Vagina (tissue), 2 donors: ENCODE measurements at regions of chr3 and their contacts with region 1.

Region 1: GRCh38 chr3:150408221-150409102 is at the start of gene TSC22D2:
- DNase-seq: peak in 1 of 2 donors; percentile 93
- H3K4me3 ChIP-seq: peak within 1 kb of the TSS; percentile 74 to 84
- H3K27ac ChIP-seq: peak within 1 kb of the TSS; percentile 99
- H3K4me1 ChIP-seq: peaks cover 30% of the 10 kb centered on the region
- H3K27me3 ChIP-seq: no peaks in the 10 kb centered on the region
- CTCF ChIP-seq: peak in 1 of 3 experiments; percentile 19
- POLR2A ChIP-seq: peak; percentile 82 to 98
- total RNA-seq, gene TSC22D2: 35.6 TPM

Region 2: GRCh38 chr3:149969940-149970715 is 438.3 kb before region 1 on chr3:
- intact Hi-C with region 1: loop called (anchors 10 kb)
- DNase-seq: peak in 1 of 2 donors; percentile 91
- H3K4me3 ChIP-seq: peak overlapping the region; percentile 91 to 95
- H3K27ac ChIP-seq: peak overlapping the region; percentile 94
- H3K4me1 ChIP-seq: peaks cover 22% of the 10 kb centered on the region
- H3K27me3 ChIP-seq: no peaks in the 10 kb centered on the region
- CTCF ChIP-seq: no peak
- POLR2A ChIP-seq: no peak

Region 3: GRCh38 chr3:150253622-150254021 is 154.8 kb before region 1 on chr3:
- intact Hi-C with region 1: loop called (anchors 5 kb)
- DNase-seq: no peak
- H3K4me3 ChIP-seq: no peak overlapping the region
- H3K27ac ChIP-seq: no peak overlapping the region
- H3K4me1 ChIP-seq: peaks cover 30% of the 10 kb centered on the region
- H3K27me3 ChIP-seq: no peaks in the 10 kb centered on the region
- CTCF ChIP-seq: no peak
- POLR2A ChIP-seq: no peak

Region 4: DNA sequence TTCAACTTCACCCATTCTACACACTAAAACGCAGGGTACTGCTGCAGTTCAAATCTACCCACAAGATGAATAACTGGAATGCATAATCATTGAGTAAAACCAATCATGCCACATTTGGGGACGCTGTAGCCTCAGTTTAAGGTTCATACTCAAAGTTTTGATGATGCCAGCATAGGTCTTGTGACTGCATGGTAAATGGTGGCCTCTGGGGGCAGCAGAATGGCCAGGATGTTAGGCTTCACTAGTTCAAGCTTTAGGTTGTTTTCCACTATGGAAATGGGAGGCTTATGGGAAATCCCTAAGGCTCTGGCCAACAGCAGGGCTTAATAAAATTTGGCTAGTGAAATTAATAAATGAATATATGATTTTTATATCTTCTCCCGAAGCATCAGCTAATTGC is 104.7 kb before region 1 on chr3:
- intact Hi-C with region 1: no loop called
- DNase-seq: no peak
- H3K4me3 ChIP-seq: no peak overlapping the region
- H3K27ac ChIP-seq: no peak overlapping the region
- H3K4me1 ChIP-seq: no peaks in the 10 kb centered on the region
- H3K27me3 ChIP-seq: no peaks in the 10 kb centered on the region
- CTCF ChIP-seq: no peak
- POLR2A ChIP-seq: no peak

Region 5: DNA sequence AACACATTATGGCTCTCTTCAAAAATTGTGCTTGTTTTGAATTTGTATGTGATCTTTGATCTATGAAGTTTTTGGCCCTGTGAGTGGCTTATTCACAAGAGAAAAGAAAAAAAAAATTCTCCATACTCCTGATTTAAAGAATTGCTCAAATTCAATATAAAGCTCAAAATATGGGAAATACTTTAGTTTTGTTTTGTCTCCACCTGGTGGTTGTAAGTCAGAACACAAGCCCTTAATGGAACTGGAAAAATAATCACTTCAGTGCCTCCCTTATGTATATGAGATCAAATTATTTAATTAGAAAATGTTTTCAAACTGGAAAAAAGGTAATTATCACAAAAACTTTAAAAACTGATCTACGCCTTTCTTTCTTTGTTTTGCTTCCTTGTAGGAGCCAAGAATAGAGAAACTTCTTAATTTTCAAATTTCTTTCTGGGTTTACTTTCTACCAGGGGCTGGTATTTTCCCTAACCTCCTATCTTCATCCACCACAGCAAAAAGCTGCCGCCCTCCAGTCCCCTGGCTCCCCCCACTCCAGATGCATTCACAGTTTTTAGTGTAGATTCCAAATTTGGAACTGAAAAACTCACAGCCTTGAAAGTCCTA is 87.2 kb after region 1 on chr3:
- intact Hi-C with region 1: loop called (anchors 10 kb)
- DNase-seq: no peak
- H3K4me3 ChIP-seq: no peak overlapping the region
- H3K27ac ChIP-seq: no peak overlapping the region
- H3K4me1 ChIP-seq: no peaks in the 10 kb centered on the region
- H3K27me3 ChIP-seq: no peaks in the 10 kb centered on the region
- CTCF ChIP-seq: peak; percentile 72 to 82 (median 73)
- POLR2A ChIP-seq: no peak

Region 6: DNA sequence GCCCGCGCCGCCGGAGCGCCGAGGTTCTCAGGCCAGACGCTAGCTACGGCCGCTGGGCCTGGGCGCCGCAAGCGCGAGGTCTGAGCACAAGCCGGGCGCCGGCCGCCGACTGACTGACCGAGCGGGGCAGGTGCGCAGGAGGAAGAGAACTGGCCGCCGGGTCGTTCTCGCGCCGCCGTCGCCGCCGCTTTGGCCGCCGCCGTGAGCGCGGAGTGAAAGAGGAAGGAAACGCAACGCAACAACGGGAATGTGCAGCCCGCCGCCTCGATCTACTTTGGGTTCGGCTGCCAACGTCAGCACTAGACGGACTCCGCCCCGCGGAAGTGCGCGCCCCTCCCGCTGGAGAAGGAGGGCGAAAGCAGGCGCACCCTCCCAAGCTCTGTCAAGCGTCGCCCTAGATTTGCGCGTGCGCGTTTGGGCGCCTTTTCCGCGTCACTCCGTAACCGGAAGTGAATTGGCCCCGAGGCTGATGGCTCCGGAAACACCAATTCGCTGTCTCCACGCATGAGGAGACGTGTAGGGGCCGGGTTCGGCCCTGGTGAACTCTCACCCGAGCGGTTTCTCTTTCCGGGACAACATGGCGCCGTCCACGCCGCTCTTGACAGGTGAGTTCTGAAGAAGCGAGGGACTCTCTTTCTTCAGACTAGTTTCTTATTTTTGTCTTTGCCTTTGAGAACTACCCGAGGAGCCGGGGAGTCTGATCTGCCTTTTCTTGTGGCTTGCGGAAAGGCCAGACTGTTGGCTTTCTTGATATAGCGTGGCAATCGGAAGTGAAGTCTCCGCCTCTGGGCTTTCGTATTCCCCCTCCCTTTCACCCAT is 138.0 kb after region 1 on chr3 and contains the starts of genes EIF2A and SERP1:
- intact Hi-C with region 1: loop called (anchors 5 kb)
- DNase-seq: peak; percentile 98 to 99
- H3K4me3 ChIP-seq: peak within 1 kb of the TSS; percentile 92 to 94
- H3K27ac ChIP-seq: peak within 1 kb of the TSS; percentile 99
- H3K4me1 ChIP-seq: peaks cover 53% of the 10 kb centered on the region
- H3K27me3 ChIP-seq: no peaks in the 10 kb centered on the region
- CTCF ChIP-seq: no peak
- POLR2A ChIP-seq: peak; percentile 14 to 98
- total RNA-seq, gene EIF2A: 146 TPM
- total RNA-seq, gene SERP1: 231 TPM

Region 7: GRCh38 chr3:150830094-150830681 is 421.7 kb after region 1 on chr3:
- intact Hi-C with region 1: no loop called
- DNase-seq: no peak
- H3K4me3 ChIP-seq: no peak overlapping the region
- H3K27ac ChIP-seq: no peak overlapping the region
- H3K4me1 ChIP-seq: no peaks in the 10 kb centered on the region
- H3K27me3 ChIP-seq: no peaks in the 10 kb centered on the region
- CTCF ChIP-seq: no peak
- POLR2A ChIP-seq: no peak